CD4-positive, alpha-beta T cell (primary cell): ENCODE measurements at regions of chrX and their contacts with region 1.

Region 1: GRCh38 chrX:79400623-79401022 is 33.5 kb upstream of the ITM2A start:
- DNase-seq: peak in 3 of 14 experiments; percentile 14 to 39 (median 21)
- ATAC-seq: peak; percentile 68
- H3K4me3 ChIP-seq: no peak overlapping the region
- H3K4me3 Mint-ChIP-seq: peak overlapping the region; percentile 23
- H3K27ac ChIP-seq: no peak overlapping the region
- H3K27ac Mint-ChIP-seq: peak overlapping the region; percentile 69
- H3K4me1 ChIP-seq: peaks cover 4% of the 10 kb centered on the region
- H3K4me1 Mint-ChIP-seq: peaks cover 6% of the 10 kb centered on the region
- H3K27me3 ChIP-seq: no peaks in the 10 kb centered on the region
- H3K27me3 Mint-ChIP-seq: no peaks in the 10 kb centered on the region
- CTCF ChIP-seq: no peak

Region 2: GRCh38 chrX:79081895-79082512 is 318.6 kb before region 1 on chrX:
- CTCF ChIA-PET with region 1: no interaction called
- POLR2A ChIA-PET with region 1: no interaction called
- intact Hi-C with region 1: loop called in 1 of 2 experiments (anchors 10 kb)
- DNase-seq: peak in 7 of 14 experiments; percentile 8 to 79 (median 51)
- ATAC-seq: peak; percentile 88
- H3K4me3 ChIP-seq: no peak overlapping the region
- H3K4me3 Mint-ChIP-seq: peak overlapping the region; percentile 82
- H3K27ac ChIP-seq: no peak overlapping the region
- H3K27ac Mint-ChIP-seq: peak overlapping the region; percentile 82
- H3K4me1 ChIP-seq: peaks cover 2% of the 10 kb centered on the region
- H3K4me1 Mint-ChIP-seq: peaks cover 33% of the 10 kb centered on the region
- H3K27me3 ChIP-seq: no peaks in the 10 kb centered on the region
- H3K27me3 Mint-ChIP-seq: no peaks in the 10 kb centered on the region
- CTCF ChIP-seq: peak; percentile 43

Region 3: DNA sequence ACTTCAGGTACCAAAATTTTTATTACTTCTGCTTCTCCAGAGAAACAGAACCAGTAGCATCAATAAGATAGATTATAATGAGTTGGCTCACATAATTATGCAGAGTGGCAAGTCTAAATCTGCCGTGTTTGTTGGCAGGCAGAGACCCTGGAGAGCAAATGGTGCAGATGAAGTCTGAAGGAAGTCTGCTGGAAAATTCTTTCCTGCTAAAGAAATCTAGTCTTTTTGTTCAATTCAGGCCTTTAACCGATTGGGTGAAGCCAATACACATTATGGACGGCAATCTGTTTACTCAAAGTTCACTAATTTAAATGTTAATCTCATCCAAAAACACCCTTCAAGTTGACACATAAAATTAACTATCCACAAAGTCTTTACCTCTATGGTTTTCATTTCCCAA is 770.0 kb after region 1 on chrX:
- CTCF ChIA-PET with region 1: no interaction called
- POLR2A ChIA-PET with region 1: no interaction called
- intact Hi-C with region 1: no loop called
- DNase-seq: no peak
- ATAC-seq: no peak
- H3K4me3 ChIP-seq: no peak overlapping the region
- H3K4me3 Mint-ChIP-seq: no peak overlapping the region
- H3K27ac ChIP-seq: no peak overlapping the region
- H3K27ac Mint-ChIP-seq: no peak overlapping the region
- H3K4me1 ChIP-seq: no peaks in the 10 kb centered on the region
- H3K4me1 Mint-ChIP-seq: no peaks in the 10 kb centered on the region
- H3K27me3 ChIP-seq: no peaks in the 10 kb centered on the region
- H3K27me3 Mint-ChIP-seq: no peaks in the 10 kb centered on the region
- CTCF ChIP-seq: no peak